Mammary epithelial cell (primary cell): ENCODE measurements at regions of chr1 and their contacts with region 1.

Region 1: GRCh38 chr1:197692965-197693364 is 82.3 kb downstream of the DENND1B start:
- DNase-seq: peak; percentile 11
- H3K4me3 ChIP-seq: no peak overlapping the region
- H3K27ac ChIP-seq: no peak overlapping the region
- H3K4me1 ChIP-seq: peaks cover 5% of the 10 kb centered on the region
- H3K27me3 ChIP-seq: no peaks in the 10 kb centered on the region
- CTCF ChIP-seq: peak; percentile 29 to 55

Region 2: GRCh38 chr1:197521118-197521739 is 171.7 kb before region 1 on chr1:
- CTCF ChIA-PET with region 1: no interaction called
- dilution Hi-C with region 1: no loop called
- in situ Hi-C with region 1: no loop called
- intact Hi-C with region 1: loop called (anchors 10 kb)
- DNase-seq: peak; percentile 17
- H3K4me3 ChIP-seq: no peak overlapping the region
- H3K27ac ChIP-seq: no peak overlapping the region
- H3K4me1 ChIP-seq: no peaks in the 10 kb centered on the region
- H3K27me3 ChIP-seq: no peaks in the 10 kb centered on the region
- CTCF ChIP-seq: peak; percentile 67 to 69

Region 3: DNA sequence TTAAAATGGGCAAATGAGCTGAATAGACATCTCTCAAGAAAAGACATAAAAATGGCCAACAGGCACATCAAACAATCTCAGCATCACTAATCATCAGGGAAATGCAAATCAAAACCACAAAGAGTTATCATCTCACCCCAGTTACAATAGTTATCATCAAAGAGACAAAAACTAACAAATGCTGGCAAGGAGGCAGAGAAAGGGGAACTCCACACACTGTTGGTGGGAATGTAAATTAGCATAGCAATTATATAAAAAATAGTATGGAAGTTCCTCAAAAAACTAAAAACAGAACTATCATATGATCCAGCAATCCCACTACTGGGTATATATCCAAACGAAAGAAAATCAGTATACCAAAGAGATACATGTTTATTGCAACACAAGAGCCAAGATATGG is 13.6 kb after region 1 on chr1:
- CTCF ChIA-PET with region 1: no interaction called
- dilution Hi-C with region 1: no loop called
- in situ Hi-C with region 1: no loop called
- intact Hi-C with region 1: no loop called
- DNase-seq: no peak
- H3K4me3 ChIP-seq: no peak overlapping the region
- H3K27ac ChIP-seq: no peak overlapping the region
- H3K4me1 ChIP-seq: no peaks in the 10 kb centered on the region
- H3K27me3 ChIP-seq: no peaks in the 10 kb centered on the region
- CTCF ChIP-seq: no peak